ENCODE measurements at regions of chr15 and their contacts with region 1.

Region 1: GRCh38 chr15:94119923-94120775 is 111.2 kb upstream of the MCTP2 start:
- DNase-seq: peak in 40 of 42 donors; percentile 19 to 88 (median 64)

Region 2: DNA sequence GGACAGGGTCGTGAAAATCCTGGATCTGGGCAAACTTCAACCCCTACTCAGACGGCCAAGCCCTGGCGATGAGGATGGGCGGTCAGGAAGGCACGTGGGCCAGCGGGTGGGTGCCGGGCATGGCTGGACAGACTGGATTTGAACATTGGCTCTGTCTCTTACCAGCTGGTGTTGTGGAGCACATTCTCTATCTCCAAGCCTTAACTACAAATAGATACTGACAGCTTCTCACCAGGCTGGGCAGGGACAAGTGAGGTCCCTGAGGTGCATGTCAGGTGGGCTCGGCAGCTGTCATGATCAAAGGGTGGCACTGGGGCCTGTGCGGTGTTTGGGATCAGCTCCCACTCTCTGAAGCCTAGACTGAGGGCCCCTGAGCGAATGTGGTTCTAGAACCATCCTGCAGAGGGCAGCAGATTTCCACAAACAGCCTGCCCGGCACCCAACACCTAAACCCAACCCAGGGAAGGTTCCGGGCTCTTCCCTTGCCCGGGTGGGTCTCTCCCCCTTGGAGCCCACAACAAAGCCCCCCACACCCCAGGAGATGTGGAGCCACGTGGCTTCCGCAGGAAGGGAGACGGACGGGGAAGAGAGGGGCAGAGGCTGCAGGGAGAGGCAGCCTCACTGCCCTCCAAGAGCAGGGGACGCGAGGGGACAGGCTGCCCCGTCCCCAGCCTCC is 1089.6 kb before region 1 on chr15:
- intact Hi-C with region 1: loop called (anchors 2 kb)
- DNase-seq: peak; percentile 55 to 91 (median 80)

Region 3: DNA sequence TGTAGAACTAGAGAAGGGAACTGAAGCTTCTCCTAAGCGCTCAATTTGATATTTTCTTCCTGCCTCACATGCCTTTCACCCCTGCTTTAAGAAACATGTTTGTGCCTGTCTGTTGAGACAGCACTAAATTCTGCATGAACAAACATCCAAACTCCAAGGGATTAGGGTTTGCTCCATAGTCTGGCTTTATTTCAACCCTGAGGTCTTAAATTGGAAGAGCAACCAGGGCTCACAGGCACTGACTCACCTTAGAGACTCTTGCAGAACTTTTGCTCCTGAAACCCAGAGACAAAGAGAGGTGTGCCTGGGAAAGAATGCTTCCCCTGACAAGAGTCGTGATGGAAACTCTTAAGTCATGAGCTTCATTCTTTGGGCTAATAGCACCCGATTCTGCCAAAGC is 282.7 kb before region 1 on chr15:
- intact Hi-C with region 1: no loop called
- DNase-seq: no peak

Region 4: DNA sequence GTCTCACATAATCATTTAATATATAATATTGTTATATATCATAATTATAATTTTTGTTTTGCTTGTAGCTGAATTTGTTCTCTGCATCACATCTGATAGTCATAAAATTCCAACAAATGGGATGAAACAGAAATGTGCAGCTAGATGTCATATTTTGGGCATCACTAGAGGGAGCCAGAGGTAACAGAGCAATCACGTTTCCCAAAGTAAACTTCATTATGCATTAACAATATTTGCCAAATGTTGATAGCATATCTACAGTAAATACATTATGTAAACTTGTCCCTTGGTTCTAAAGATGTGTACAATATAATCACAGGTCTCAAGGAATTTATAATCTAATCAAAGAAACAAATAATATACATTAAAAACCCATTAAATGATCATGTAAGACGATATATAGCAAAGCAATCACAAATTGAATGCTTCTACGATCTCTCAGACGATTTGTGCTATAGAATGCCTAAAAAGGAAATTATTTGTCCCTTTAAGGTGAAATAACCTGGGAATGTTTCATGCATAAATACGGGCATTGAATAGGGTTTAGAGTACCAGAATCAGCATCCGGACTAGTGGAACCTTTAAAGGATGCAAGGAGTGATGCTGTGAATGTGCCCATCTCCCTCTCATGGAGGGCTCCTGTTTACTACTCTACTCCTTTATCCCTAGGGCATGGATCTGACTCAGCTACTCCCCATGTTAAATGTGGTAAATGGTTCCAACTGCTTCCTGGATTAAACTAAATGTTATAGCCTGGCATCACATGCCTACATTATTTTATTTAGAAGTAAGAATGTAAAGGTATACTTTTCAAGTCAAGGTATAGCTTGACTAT is 122.8 kb before region 1 on chr15:
- intact Hi-C with region 1: loop called (anchors 10 kb)
- DNase-seq: peak in 7 of 42 donors; percentile 5 to 61 (median 16)

Region 5: DNA sequence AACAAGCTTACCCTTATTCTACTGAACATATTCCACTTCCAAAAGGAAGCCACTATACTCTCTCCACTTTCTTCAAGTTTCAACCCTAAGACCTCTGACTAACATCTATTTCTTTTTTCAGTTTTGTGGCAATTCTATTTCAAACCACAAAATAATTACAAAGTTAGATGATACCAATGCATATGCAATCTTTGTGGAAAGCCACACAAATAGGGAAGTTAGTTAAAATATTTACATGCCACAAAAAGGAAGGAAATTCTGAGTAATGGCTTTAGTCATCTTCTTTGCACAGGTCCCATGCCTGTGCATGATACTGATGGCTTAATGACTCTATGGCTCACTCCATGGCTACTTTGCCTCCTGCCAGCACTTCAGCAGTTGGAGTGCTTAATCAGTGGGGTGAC is 54.3 kb after region 1 on chr15:
- intact Hi-C with region 1: no loop called
- DNase-seq: no peak